WTC11 (cell line): ENCODE measurements at regions of chr7 and their contacts with region 1.

Region 1: GRCh38 chr7:129218514-129219062 is 6.2 kb upstream of the AHCYL2 start:
- DNase-seq: peak; percentile 91
- ATAC-seq: peak; percentile 80
- H3K4me3 Mint-ChIP-seq: no peak overlapping the region
- H3K27ac Mint-ChIP-seq: no peak overlapping the region
- H3K4me1 Mint-ChIP-seq: 0 out of 2 replicates have a peak, but pooled peaks cover 5% of the 10 kb centered on the region
- H3K27me3 Mint-ChIP-seq: no peaks in the 10 kb centered on the region; the same call in 1 of the 2 replicates
- CTCF ChIP-seq: peak; percentile 95

Region 2: DNA sequence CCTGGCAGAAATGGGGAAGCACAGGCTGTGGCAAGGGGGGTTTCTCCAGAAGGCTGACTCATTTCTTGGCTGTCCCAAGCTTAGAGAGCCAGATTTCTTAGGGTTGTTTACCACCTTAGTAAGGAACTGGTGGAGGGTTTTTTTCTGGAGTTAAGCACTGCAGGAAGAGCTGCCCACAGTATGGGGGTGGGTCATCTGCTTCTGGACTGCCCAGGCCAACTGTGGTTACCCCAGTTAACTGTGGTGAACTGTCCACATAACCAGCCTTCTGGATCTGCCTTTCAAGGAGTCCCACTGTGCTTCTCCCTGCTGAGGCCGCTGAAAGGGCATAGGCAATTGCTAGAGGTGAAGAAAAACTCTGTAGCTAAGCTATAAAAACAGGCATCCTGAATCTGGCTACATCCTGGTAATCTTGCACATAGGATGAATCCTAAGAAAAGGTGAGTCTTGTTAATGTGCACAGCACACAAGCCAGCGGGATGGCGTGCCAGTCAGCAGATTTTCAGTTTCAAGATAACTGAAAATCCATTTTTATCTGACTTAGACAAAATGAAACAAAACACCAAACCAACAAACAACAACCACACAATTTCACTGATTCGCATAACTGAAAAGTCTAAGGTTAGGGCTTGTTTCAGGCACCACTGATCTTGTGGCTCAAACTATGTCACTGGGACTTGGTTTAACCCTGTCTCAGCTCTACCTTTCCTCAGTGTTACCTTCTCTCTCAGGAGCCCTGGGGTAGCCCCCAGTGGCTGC is 95.7 kb before region 1 on chr7:
- CTCF ChIA-PET with region 1: no interaction called
- POLR2A ChIA-PET with region 1: no interaction called
- DNase-seq: no peak
- ATAC-seq: no peak
- H3K4me3 Mint-ChIP-seq: no peak overlapping the region
- H3K27ac Mint-ChIP-seq: no peak overlapping the region
- H3K4me1 Mint-ChIP-seq: no peaks in the 10 kb centered on the region
- H3K27me3 Mint-ChIP-seq: peaks cover 28% of the 10 kb centered on the region
- CTCF ChIP-seq: no peak

Region 3: DNA sequence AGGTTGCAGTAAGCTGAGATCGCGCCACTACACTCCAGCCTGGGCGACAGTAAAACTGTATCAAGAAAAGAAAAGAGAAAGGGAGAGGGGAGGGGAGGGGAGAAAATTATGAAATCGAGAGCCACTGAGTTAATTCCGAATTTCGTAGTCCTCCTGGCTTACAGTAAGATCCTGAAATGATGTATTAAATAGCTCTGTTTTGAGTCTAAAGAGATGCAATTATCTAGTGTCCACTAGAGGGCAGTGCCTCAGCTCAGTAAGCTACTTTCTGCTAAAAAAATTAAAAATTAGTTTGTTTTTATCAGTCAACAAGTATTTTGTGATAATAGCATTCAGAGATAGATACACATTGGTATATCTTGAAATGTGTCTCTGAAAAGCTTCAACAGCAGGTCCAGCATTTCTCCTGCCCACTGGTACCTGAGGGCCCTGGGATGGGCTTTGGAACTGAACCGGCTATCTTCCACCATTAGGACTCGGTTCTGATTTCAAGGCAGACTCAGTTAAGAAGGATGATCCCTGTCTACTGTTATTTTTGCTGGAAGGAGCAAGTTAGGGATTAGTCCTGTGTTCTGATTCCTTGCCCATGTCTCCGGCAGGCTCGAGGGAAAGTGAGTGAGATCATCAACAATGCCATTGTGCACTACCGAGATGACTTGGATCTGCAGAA is 54.6 kb before region 1 on chr7:
- CTCF ChIA-PET with region 1: interaction called, 45 read pairs
- POLR2A ChIA-PET with region 1: interaction called, 5 read pairs
- DNase-seq: no peak
- ATAC-seq: no peak
- H3K4me3 Mint-ChIP-seq: no peak overlapping the region
- H3K27ac Mint-ChIP-seq: no peak overlapping the region
- H3K4me1 Mint-ChIP-seq: peaks cover 17% of the 10 kb centered on the region
- H3K27me3 Mint-ChIP-seq: no peaks in the 10 kb centered on the region
- CTCF ChIP-seq: peak; percentile 67

Region 4: GRCh38 chr7:129271500-129272355 is 53.1 kb after region 1 on chr7:
- CTCF ChIA-PET with region 1: interaction called, 46 read pairs
- POLR2A ChIA-PET with region 1: interaction called, 4 read pairs
- DNase-seq: peak; percentile 40
- ATAC-seq: peak; percentile 86
- H3K4me3 Mint-ChIP-seq: no peak overlapping the region
- H3K27ac Mint-ChIP-seq: no peak overlapping the region
- H3K4me1 Mint-ChIP-seq: peaks cover 14% of the 10 kb centered on the region
- H3K27me3 Mint-ChIP-seq: no peaks in the 10 kb centered on the region
- CTCF ChIP-seq: peak; percentile 62

Region 5: GRCh38 chr7:129332284-129333035 is 113.9 kb after region 1 on chr7:
- CTCF ChIA-PET with region 1: interaction called, 19 read pairs
- POLR2A ChIA-PET with region 1: no interaction called
- DNase-seq: no peak
- ATAC-seq: no peak
- H3K4me3 Mint-ChIP-seq: no peak overlapping the region
- H3K27ac Mint-ChIP-seq: no peak overlapping the region
- H3K4me1 Mint-ChIP-seq: no peaks in the 10 kb centered on the region
- H3K27me3 Mint-ChIP-seq: no peaks in the 10 kb centered on the region
- CTCF ChIP-seq: no peak

Region 6: GRCh38 chr7:129376076-129376777 is 157.6 kb after region 1 on chr7:
- CTCF ChIA-PET with region 1: interaction called, 19 read pairs
- POLR2A ChIA-PET with region 1: no interaction called
- DNase-seq: peak; percentile 29
- ATAC-seq: peak; percentile 56
- H3K4me3 Mint-ChIP-seq: no peak overlapping the region
- H3K27ac Mint-ChIP-seq: peak overlapping the region; percentile 28
- H3K4me1 Mint-ChIP-seq: peaks cover 38% of the 10 kb centered on the region
- H3K27me3 Mint-ChIP-seq: no peaks in the 10 kb centered on the region
- CTCF ChIP-seq: peak; percentile 32; the same call in 1 of the 2 replicates